ENCODE measurements at regions of chr16 and their contacts with region 1.

Region 1: DNA sequence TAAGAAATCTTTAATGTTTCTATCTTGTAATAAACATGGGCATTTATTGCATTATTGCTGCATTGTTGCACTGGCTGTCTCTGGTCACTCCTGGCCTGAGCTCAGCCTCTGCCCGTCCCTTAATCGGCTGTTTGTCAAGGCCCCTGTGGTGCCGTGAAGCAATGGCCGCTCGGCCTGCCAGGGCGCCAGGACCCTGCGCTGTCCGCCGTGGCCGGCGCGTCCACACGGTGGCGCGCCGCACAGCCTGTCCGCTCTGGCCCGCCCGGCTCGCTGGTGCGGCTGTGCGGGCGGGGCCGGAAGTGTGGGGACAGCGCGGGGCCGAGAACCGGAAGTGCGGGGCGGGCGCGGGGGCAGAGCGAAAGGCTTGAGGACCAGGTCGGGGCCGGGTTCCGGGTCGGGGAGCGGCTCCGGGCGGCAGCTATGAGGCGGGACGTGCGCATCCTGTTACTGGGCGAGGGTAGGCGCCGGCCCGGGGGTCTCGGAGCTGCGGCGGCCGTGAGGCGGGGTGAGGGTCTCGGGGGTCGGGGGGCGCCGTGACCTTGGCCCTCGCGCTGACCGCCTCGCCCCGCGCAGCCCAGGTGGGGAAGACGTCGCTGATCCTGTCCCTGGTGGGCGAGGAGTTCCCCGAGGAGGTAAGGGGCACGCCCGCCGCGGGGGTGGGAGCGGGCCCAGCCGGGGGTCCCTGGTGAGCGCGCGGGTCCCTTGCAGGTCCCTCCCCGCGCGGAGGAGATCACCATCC is at the start of gene RHOT2:
- DNase-seq: peak; percentile 94 to 98 (median 98)
- ATAC-seq: peak; percentile 88 to 90
- H3K4me3 ChIP-seq: peak within 1 kb of the TSS; percentile 89
- H3K27ac ChIP-seq: peak within 1 kb of the TSS; percentile 58
- H3K4me1 ChIP-seq: peaks cover 3% of the 10 kb centered on the region
- H3K27me3 ChIP-seq: no peaks in the 10 kb centered on the region
- total RNA-seq, gene RHOT2: 84.3 to 104 (median 90.8) TPM

Region 2: GRCh38 chr16:391885-392335 is 276.0 kb before region 1 on chr16:
- intact Hi-C with region 1: loop called in 1 of 4 experiments (anchors 10 kb)
- DNase-seq: peak; percentile 58 to 84 (median 80)
- ATAC-seq: peak; percentile 36 to 64
- H3K4me3 ChIP-seq: no peak overlapping the region
- H3K27ac ChIP-seq: no peak overlapping the region
- H3K4me1 ChIP-seq: no peaks in the 10 kb centered on the region
- H3K27me3 ChIP-seq: no peaks in the 10 kb centered on the region

Region 3: GRCh38 chr16:589658-590159 is 78.2 kb before region 1 on chr16 and contains the start of gene RAB40C:
- intact Hi-C with region 1: loop called in 2 of 4 experiments (anchors 5 to 10 kb)
- DNase-seq: peak; percentile 99 to 100 (median 100)
- ATAC-seq: peak; percentile 95 to 96
- H3K4me3 ChIP-seq: peak within 1 kb of the TSS; percentile 73
- H3K27ac ChIP-seq: peak within 1 kb of the TSS; percentile 89
- H3K4me1 ChIP-seq: no peaks in the 10 kb centered on the region
- H3K27me3 ChIP-seq: no peaks in the 10 kb centered on the region
- total RNA-seq, gene RAB40C: 10.9 to 13.4 (median 11.9) TPM

Region 4: DNA sequence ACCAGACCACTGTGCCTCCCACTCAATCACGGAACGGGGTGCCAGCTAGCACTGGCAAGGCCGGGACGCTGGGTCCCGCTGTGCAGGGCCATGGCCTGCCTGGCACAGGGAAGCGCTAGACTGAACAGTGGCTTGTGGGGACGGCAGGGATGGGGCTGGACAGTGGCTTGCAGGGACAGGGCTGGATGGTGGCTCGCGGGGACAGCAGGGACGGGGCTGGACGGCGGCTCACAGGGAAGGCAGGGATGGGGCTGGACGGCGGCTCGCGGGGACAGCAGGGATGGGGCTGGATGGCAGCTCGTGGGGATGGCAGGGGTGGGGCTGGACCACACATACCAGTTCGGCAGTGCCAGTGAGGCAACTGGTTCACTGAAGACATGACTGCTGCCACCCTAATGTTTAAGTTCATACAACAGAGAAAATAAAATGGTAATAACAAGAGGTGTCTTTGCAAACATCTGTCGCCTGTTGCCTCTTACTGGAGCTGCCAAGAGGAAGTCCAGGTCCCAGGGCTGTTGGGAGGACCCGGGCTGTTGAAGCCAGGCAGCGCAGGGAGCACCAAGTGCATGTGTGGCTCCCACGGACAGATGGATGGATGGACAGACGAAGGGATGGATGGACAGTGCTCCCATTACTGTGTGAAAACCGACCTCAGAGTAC is 270.3 kb after region 1 on chr16:
- intact Hi-C with region 1: no loop called
- DNase-seq: no peak
- ATAC-seq: peak; percentile 28 to 40
- H3K4me3 ChIP-seq: no peak overlapping the region
- H3K27ac ChIP-seq: no peak overlapping the region
- H3K4me1 ChIP-seq: no peaks in the 10 kb centered on the region
- H3K27me3 ChIP-seq: no peaks in the 10 kb centered on the region